ENCODE measurements at regions of chr20 and their contacts with region 1.

Region 1: GRCh38 chr20:44885392-44886265 is at the start of gene YWHAB:
- DNase-seq: peak; percentile 95 to 99 (median 98)
- ATAC-seq: peak; percentile 94
- H3K4me3 ChIP-seq: peak within 1 kb of the TSS; percentile 87 to 90
- H3K4me3 Mint-ChIP-seq: peak within 1 kb of the TSS; percentile 92
- H3K27ac ChIP-seq: peak within 1 kb of the TSS; percentile 88 to 92
- H3K27ac Mint-ChIP-seq: peak within 1 kb of the TSS; percentile 97
- H3K4me1 ChIP-seq: peaks cover 43% of the 10 kb centered on the region
- H3K4me1 Mint-ChIP-seq: peaks cover 71% of the 10 kb centered on the region
- H3K27me3 ChIP-seq: no peaks in the 10 kb centered on the region
- H3K27me3 Mint-ChIP-seq: no peaks in the 10 kb centered on the region
- CTCF ChIP-seq: no peak
- total RNA-seq, gene YWHAB: 124 to 136 TPM

Region 2: DNA sequence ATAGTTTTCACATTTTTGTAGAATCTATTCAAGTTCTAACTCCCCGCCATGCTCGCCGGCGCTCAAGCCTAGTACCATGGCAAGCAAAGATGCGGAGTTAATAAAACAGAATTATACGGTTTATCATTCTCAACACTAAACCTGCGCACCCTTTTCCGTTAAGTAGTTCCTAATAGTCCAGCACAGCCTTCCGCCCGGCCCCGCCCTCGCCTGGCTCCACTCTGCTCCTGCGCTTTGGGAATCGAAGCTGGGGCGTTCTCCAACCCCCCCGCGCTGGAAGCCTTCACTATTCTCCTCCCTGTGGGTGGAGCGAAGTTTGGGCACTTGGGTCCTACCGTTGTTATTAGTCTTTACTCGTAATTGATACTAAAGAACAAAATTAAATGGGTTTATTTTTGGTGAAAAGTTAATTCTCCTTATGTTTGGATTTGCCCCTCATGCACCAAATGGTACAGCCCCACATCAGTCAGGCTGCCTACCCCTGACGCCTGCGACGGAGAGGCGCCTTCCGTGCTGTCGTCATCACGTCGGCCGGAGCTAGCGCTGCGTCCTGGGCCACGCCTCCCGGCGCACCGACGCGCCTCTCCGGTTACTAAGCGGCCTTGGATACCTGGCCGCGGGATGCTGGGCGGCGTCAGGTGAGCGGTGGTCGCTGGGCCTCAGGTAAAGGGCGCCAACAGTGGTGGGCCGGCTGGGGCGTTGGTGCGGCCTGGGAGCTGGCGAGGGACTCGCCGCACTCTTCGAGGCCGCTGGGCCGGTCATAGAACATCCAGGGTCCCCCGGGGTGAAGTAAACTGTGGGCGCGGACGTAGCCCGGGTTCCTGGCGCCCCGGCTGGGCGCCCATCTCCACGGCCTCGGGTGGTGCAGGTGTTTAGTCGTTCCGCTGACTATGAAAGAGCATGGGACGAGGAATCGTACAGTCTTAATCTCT is 1295.0 kb before region 1 on chr20 and contains the start of gene IFT52:
- CTCF ChIA-PET with region 1: no interaction called
- POLR2A ChIA-PET with region 1: no interaction called
- intact Hi-C with region 1: loop called in 1 of 2 experiments (anchors 10 kb)
- DNase-seq: peak; percentile 79 to 96 (median 89)
- ATAC-seq: peak; percentile 98
- H3K4me3 ChIP-seq: peak within 1 kb of the TSS; percentile 62 to 88
- H3K4me3 Mint-ChIP-seq: peak within 1 kb of the TSS; percentile 91
- H3K27ac ChIP-seq: peak within 1 kb of the TSS; percentile 74 to 96
- H3K27ac Mint-ChIP-seq: peak within 1 kb of the TSS; percentile 96
- H3K4me1 ChIP-seq: peaks cover 13% of the 10 kb centered on the region
- H3K4me1 Mint-ChIP-seq: peaks cover 20% of the 10 kb centered on the region
- H3K27me3 ChIP-seq: no peaks in the 10 kb centered on the region
- H3K27me3 Mint-ChIP-seq: peaks cover 3% of the 10 kb centered on the region
- CTCF ChIP-seq: no peak
- total RNA-seq, gene IFT52: 11.5 to 14.1 TPM

Region 3: GRCh38 chr20:44475694-44476560 is 409.7 kb before region 1 on chr20 and contains the start of gene TTPAL:
- CTCF ChIA-PET with region 1: no interaction called
- POLR2A ChIA-PET with region 1: no interaction called
- intact Hi-C with region 1: loop called (anchors 5 to 10 kb)
- DNase-seq: peak; percentile 72 to 95 (median 88)
- ATAC-seq: peak; percentile 96
- H3K4me3 ChIP-seq: peak within 1 kb of the TSS; percentile 82 to 90
- H3K4me3 Mint-ChIP-seq: peak within 1 kb of the TSS; percentile 86
- H3K27ac ChIP-seq: peak within 1 kb of the TSS; percentile 94 to 96
- H3K27ac Mint-ChIP-seq: peak within 1 kb of the TSS; percentile 95
- H3K4me1 ChIP-seq: peaks cover 16% of the 10 kb centered on the region
- H3K4me1 Mint-ChIP-seq: peaks cover 27% of the 10 kb centered on the region
- H3K27me3 ChIP-seq: no peaks in the 10 kb centered on the region
- H3K27me3 Mint-ChIP-seq: no peaks in the 10 kb centered on the region
- CTCF ChIP-seq: peak; percentile 26
- total RNA-seq, gene TTPAL: 12.3 TPM

Region 4: GRCh38 chr20:44896583-44896982 is 11.0 kb after region 1 on chr20:
- CTCF ChIA-PET with region 1: interaction called, 8 read pairs
- POLR2A ChIA-PET with region 1: interaction called, 7 read pairs
- intact Hi-C with region 1: loop called in 1 of 2 experiments (anchors 1 kb)
- DNase-seq: peak in 1 of 9 experiments; percentile 35
- ATAC-seq: no peak
- H3K4me3 ChIP-seq: no peak overlapping the region
- H3K4me3 Mint-ChIP-seq: peak overlapping the region; percentile 23
- H3K27ac ChIP-seq: peak overlapping the region in 1 of 2 experiments; percentile 52
- H3K27ac Mint-ChIP-seq: peak overlapping the region; percentile 79
- H3K4me1 ChIP-seq: peaks cover 80% of the 10 kb centered on the region
- H3K4me1 Mint-ChIP-seq: peaks cover 84% of the 10 kb centered on the region
- H3K27me3 ChIP-seq: no peaks in the 10 kb centered on the region
- H3K27me3 Mint-ChIP-seq: no peaks in the 10 kb centered on the region
- CTCF ChIP-seq: no peak

Region 5: DNA sequence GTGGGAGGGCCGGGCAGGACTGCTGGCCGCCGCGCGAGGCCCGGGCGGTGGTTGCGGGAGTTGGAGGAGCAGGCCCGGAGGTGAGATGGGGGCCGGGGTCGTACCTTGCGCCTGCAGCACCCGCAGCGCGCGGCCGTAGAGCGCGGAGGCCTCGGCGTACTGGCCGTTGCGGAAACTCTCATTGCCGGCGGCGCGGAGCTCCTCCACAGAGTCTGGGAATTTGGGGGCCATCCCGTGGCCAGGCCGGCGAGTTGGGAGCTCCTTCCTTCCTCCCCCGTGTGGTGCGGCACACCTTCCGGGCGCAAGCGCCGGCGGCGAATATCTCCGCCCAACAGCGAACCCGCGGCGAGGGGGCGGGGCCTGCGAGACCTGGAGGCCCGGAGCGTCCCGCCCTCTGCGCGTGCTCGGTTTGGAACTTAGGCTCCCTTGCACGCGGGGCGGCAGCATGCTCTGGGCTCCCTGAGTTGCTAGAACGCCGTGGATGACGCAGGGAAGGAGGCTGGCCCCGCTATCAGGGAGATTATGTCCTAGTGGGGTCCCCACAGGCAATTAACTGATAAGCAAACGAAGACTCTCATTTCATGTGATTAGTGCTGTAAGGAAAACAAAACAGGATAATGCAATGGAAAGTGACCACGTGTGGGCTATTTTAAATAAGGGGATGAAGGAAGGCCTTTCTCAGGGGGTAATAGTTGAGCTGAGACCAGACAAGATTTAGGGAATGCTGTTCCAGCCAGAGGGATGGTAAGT is 74.6 kb after region 1 on chr20 and contains the start of gene TOMM34:
- CTCF ChIA-PET with region 1: no interaction called
- POLR2A ChIA-PET with region 1: interaction called, 11 read pairs
- intact Hi-C with region 1: loop called (anchors 1 to 5 kb)
- DNase-seq: peak; percentile 84 to 97 (median 95)
- ATAC-seq: peak; percentile 94
- H3K4me3 ChIP-seq: peak within 1 kb of the TSS; percentile 70 to 80
- H3K4me3 Mint-ChIP-seq: peak within 1 kb of the TSS; percentile 96
- H3K27ac ChIP-seq: peak within 1 kb of the TSS; percentile 58 to 60
- H3K27ac Mint-ChIP-seq: peak within 1 kb of the TSS; percentile 96
- H3K4me1 ChIP-seq: peaks cover 32% of the 10 kb centered on the region
- H3K4me1 Mint-ChIP-seq: peaks cover 56% of the 10 kb centered on the region
- H3K27me3 ChIP-seq: no peaks in the 10 kb centered on the region
- H3K27me3 Mint-ChIP-seq: no peaks in the 10 kb centered on the region
- CTCF ChIP-seq: no peak
- total RNA-seq, gene TOMM34: 11.9 to 12.4 TPM

Region 6: GRCh38 chr20:45044084-45044573 is 158.5 kb after region 1 on chr20:
- CTCF ChIA-PET with region 1: no interaction called
- POLR2A ChIA-PET with region 1: no interaction called
- intact Hi-C with region 1: loop called in 1 of 2 experiments (anchors 5 kb)
- DNase-seq: peak in 5 of 9 experiments; percentile 30 to 82 (median 42)
- ATAC-seq: peak; percentile 86
- H3K4me3 ChIP-seq: no peak overlapping the region
- H3K4me3 Mint-ChIP-seq: no peak overlapping the region
- H3K27ac ChIP-seq: peak overlapping the region in 1 of 2 experiments; percentile 22
- H3K27ac Mint-ChIP-seq: peak overlapping the region; percentile 33
- H3K4me1 ChIP-seq: peaks cover 40% of the 10 kb centered on the region
- H3K4me1 Mint-ChIP-seq: peaks cover 79% of the 10 kb centered on the region
- H3K27me3 ChIP-seq: no peaks in the 10 kb centered on the region
- H3K27me3 Mint-ChIP-seq: no peaks in the 10 kb centered on the region
- CTCF ChIP-seq: peak; percentile 90

Region 7: DNA sequence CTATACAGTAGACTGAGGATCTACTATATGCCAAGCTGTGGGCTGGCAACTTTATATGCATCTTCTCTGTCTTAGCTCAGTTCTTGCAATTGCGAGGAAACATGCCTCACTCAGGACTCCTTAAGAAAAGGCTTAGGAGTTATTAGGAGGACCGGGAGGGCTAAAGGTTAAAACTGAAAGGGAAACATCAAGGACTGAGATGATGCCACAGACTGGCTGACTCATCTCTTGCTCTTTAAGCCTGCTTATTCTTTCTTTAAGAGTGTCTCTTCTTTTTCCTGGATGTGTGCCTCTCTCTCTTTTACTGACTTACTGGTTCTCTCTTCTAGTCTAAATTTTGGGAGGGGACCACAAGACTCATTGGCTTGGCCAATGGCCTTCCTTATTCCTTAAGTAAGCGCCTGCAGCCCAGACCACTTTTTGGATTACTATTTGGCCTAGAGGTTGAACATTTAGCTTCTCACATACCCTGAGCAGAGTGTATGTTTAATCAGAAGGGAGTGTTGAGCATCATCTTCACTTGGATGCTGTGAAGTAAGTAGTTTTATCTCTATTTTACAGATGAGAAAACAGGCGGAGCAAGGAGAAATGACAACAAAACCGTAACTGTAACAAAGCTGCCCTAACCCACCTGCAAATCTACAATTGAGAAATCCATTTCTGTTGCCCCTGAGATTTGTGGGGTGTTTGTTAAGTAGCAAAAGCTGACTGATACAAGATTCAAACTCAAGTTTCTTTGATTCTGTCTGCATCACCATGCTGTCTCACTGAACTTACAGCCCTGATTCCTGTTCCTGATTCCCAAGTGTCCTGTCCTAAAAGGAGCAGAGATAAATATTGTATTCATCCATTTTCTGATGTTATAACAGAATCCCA is 469.8 kb after region 1 on chr20:
- CTCF ChIA-PET with region 1: no interaction called
- POLR2A ChIA-PET with region 1: no interaction called
- intact Hi-C with region 1: no loop called
- DNase-seq: no peak
- ATAC-seq: no peak
- H3K4me3 ChIP-seq: no peak overlapping the region
- H3K4me3 Mint-ChIP-seq: no peak overlapping the region
- H3K27ac ChIP-seq: no peak overlapping the region
- H3K27ac Mint-ChIP-seq: no peak overlapping the region
- H3K4me1 ChIP-seq: no peaks in the 10 kb centered on the region
- H3K4me1 Mint-ChIP-seq: peaks cover 5% of the 10 kb centered on the region
- H3K27me3 ChIP-seq: no peaks in the 10 kb centered on the region
- H3K27me3 Mint-ChIP-seq: no peaks in the 10 kb centered on the region
- CTCF ChIP-seq: no peak

Measured in CD8-positive, alpha-beta T cell (primary cell).